ENCODE measurements at regions of chr20 and their contacts with region 1.

Region 1: DNA sequence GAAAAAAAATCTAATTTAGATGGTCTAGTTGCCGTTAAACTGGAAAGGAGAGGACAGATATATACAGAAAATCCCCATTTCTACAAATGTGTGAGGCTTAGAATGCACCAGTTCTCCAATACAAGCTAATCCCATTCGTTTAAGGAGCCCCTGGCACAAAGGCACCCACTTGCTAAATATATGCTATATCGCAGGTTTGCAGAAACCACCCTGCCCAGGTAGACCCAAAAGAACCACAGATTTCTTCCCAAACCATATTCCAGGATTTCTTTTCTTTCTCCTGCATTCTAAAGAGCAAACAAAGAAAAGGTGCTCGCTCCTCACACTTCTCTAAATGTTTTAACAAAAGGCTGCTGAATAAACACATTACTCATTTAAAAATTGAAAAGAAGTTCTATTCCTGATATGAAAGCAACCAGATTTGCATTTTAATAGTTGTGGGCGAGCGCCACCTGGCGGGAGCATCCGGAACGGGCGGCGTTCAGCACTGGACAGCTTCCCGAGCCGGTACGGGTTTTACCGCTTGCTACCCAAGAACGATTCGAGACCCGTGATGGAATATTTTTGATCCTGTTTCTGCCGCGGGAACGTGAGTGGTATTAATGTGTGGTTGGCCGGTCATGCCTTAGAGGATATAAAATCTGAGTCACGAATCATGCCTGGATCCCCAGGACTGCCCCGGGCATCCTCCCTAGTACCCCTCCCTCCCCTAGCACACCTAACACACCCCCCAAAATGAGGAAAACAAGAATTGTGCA is 2.1 kb downstream of the PTPRT start:
- DNase-seq: peak in 2 of 3 donors; percentile 75 to 80
- ATAC-seq: peak; percentile 67
- H3K4me3 ChIP-seq: no peak overlapping the region
- H3K4me1 ChIP-seq: no peaks in the 10 kb centered on the region
- CTCF ChIP-seq: peak; percentile 89

Region 2: DNA sequence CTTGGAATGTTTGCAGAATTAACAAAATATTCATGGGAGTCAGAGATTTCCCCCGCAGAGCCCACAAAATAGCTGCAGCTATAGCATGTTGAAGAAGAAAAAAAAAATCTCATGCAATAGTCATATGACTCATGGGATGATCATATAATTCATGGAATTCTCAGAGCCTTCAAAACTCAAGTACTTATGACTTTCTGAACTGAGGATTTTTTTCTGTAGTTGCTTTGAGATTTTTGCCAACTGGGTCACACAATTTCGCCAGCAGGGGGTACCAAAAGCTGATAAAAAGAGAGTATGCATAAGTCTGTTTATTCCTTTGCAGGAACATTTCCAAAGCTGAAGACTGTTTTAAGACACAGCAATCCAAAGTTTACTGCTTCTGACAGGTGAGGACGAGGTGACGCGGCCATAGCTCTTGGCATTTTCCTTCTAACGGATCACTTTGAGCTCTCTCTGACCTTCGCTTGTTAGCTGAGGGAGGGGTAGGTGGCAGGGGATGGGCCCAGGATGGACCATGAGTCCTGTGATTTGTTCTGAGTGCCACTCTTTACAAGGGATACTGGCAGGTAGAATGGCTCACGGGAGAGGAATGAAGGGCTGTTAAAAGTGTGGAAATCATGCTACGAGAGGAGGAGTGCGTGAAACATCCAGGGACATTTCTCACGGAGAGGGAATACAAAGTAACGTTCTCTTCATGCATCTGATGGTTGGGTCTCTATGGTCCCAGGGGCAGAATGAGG is 983.3 kb before region 1 on chr20:
- intact Hi-C with region 1: loop called in 1 of 2 experiments (anchors 5 kb)
- DNase-seq: peak in 1 of 3 donors; percentile 7
- ATAC-seq: no peak
- H3K4me3 ChIP-seq: no peak overlapping the region
- H3K4me1 ChIP-seq: no peaks in the 10 kb centered on the region
- CTCF ChIP-seq: no peak

Region 3: GRCh38 chr20:43040427-43040826 is 147.2 kb before region 1 on chr20:
- intact Hi-C with region 1: no loop called
- DNase-seq: peak in 1 of 3 donors; percentile 4
- ATAC-seq: no peak
- H3K4me3 ChIP-seq: no peak overlapping the region
- H3K4me1 ChIP-seq: no peaks in the 10 kb centered on the region
- CTCF ChIP-seq: no peak

Region 4: GRCh38 chr20:43102394-43102793 is 85.3 kb before region 1 on chr20:
- intact Hi-C with region 1: no loop called
- DNase-seq: no peak
- ATAC-seq: no peak
- H3K4me3 ChIP-seq: no peak overlapping the region
- H3K4me1 ChIP-seq: no peaks in the 10 kb centered on the region
- CTCF ChIP-seq: no peak

Measured in mucosa of descending colon (tissue), 3 donors.